ENCODE measurements at regions of chr16 and their contacts with region 1.

Region 1: DNA sequence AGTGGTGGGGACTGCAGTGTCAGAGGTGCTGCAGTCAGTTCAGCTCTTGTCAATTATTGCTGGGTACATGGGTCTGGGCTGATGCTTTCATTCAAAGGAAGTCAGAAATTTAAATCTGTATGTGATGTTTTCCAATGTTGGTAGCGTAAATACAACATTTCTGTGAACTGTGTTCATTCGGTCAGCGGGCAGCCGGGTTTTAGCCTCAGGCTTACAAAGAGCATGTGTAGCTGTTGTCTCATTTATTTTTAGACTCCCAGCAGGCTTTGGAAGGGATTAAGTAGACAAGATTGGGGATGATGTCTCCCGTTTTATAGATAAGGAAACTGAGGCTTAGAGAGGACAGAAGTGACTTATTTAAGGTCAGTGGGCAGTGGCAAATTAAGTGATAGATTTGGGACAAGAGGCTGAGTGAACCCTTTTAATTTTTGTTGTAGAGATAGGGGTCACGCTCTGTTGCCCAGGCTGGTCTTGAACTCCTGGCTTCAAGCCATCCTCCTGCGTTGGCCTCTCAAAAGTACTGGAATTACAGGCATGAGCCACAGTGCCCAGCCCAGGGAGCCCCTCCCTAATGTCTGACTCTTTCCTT is 8.1 kb downstream of the AQP8 start:
- DNase-seq: no peak
- H3K4me3 Mint-ChIP-seq: no peak overlapping the region
- H3K27ac Mint-ChIP-seq: no peak overlapping the region
- H3K4me1 Mint-ChIP-seq: peaks cover 7% of the 10 kb centered on the region
- H3K27me3 Mint-ChIP-seq: no peaks in the 10 kb centered on the region
- CTCF ChIP-seq: no peak

Region 2: DNA sequence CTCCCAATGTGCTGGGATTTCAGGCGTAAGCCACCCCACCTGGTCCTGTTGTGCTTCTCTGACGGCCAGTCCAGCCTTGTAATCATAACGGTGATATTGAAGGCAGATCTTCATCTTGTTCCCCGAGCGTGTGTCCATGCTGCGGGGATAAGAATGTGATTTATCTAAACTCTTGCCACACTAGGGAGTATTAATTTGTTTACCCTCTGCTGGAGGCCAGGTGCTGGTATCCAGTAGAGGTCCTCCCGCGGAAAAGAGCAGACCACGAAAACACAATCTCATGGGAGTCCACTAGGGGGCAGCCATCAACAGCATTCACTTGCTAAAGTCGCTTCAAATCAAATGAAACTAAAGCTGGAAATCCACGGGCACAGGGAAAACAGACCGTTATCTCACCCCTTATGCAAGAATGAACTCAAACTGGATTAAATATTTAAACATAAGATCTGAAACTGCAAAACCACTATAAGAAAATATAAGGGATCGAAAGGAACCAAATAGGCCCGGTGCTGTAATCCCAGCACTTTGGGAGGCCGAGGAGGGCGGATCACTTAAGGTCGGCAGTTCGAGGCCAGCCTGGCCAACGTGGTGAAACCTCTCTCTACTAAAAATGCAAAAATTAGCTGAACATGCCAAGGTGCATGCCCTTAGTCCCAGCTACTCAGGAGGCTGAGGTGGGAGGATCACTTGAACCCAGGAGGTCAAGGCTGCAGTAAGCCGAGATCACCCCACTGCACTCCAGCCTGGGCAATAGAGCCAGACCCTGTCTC is 707.7 kb before region 1 on chr16:
- CTCF ChIA-PET with region 1: interaction called, 5 read pairs
- POLR2A ChIA-PET with region 1: no interaction called
- intact Hi-C with region 1: loop called (anchors 5 kb)
- DNase-seq: peak; percentile 86
- H3K4me3 Mint-ChIP-seq: peak overlapping the region; percentile 39
- H3K27ac Mint-ChIP-seq: no peak overlapping the region
- H3K4me1 Mint-ChIP-seq: peaks cover 6% of the 10 kb centered on the region
- H3K27me3 Mint-ChIP-seq: no peaks in the 10 kb centered on the region
- CTCF ChIP-seq: peak; percentile 87

Region 3: DNA sequence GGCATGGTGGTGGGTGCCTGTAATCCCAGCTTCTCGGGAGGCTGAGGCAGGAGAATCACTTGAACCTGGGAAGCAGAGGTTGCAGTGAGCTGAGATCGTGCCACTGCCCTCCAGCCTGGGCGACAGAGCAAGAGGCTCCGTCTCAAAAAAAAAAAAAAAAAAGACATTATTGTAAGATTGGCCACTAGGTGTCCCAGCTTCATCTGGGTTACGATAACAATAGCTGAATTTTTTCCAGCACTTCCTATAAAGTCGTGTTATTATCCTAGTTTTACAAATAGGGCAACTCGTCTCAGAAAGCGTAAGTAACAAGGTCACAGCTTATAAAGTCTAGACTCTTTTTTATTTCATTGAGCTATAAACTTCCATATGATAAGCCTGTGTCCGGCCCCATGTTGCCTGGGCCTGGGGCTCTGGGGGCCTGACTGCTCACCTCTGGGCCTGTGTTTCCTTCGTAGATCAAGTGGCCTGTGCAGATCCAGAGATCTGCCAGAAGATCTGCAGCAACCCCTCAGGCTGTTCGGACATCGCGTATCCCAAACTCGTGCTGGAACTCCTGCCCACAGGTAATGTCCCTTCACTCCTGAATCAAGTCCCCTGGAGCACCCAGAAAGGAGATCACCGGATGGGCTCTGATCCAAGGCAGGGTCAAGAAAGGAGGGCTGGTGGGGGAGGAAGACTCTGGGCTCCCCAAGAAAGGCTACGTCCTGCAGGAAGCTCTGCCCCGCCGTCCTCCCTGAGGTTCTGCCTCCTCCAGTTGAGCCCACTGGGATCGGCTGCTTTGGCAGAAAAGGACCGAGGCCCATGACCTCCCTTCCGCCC is 318.4 kb before region 1 on chr16:
- CTCF ChIA-PET with region 1: interaction called, 17 read pairs
- POLR2A ChIA-PET with region 1: no interaction called
- intact Hi-C with region 1: no loop called
- DNase-seq: peak; percentile 26
- H3K4me3 Mint-ChIP-seq: no peak overlapping the region
- H3K27ac Mint-ChIP-seq: no peak overlapping the region
- H3K4me1 Mint-ChIP-seq: no peaks in the 10 kb centered on the region
- H3K27me3 Mint-ChIP-seq: peaks cover 22% of the 10 kb centered on the region
- CTCF ChIP-seq: peak; percentile 49

Region 4: GRCh38 chr16:25051406-25052150 is 173.2 kb before region 1 on chr16:
- CTCF ChIA-PET with region 1: interaction called, 22 read pairs
- POLR2A ChIA-PET with region 1: no interaction called
- intact Hi-C with region 1: loop called (anchors 1 kb)
- DNase-seq: no peak
- H3K4me3 Mint-ChIP-seq: no peak overlapping the region
- H3K27ac Mint-ChIP-seq: peak overlapping the region; percentile 23
- H3K4me1 Mint-ChIP-seq: peaks cover 20% of the 10 kb centered on the region
- H3K27me3 Mint-ChIP-seq: no peaks in the 10 kb centered on the region
- CTCF ChIP-seq: no peak

Region 5: GRCh38 chr16:25126820-25127232 is 98.0 kb before region 1 on chr16:
- CTCF ChIA-PET with region 1: interaction called, 19 read pairs
- POLR2A ChIA-PET with region 1: no interaction called
- intact Hi-C with region 1: loop called (anchors 1 kb)
- DNase-seq: peak; percentile 86
- H3K4me3 Mint-ChIP-seq: no peak overlapping the region
- H3K27ac Mint-ChIP-seq: no peak overlapping the region
- H3K4me1 Mint-ChIP-seq: peaks cover 15% of the 10 kb centered on the region
- H3K27me3 Mint-ChIP-seq: no peaks in the 10 kb centered on the region
- CTCF ChIP-seq: peak; percentile 58

Region 6: DNA sequence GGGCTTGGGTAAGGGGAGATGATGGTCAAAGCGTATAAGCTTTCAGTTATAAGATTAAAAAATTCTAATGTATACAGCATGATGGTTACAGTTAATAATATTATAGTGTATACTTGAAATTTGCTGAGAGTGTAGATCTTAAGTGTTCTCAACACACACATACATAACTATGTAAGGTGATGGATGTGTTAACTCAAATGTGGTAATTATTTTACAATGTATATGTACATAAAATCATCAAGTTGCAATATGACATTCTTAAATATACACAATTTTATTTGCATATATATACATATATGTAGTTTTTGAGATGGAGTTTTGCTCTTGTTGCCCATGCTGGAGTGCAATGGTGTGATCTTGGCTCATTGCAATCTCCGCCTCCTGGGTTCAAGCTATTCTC is 25.6 kb after region 1 on chr16:
- CTCF ChIA-PET with region 1: interaction called, 18 read pairs
- POLR2A ChIA-PET with region 1: no interaction called
- intact Hi-C with region 1: no loop called
- DNase-seq: no peak
- H3K4me3 Mint-ChIP-seq: no peak overlapping the region
- H3K27ac Mint-ChIP-seq: no peak overlapping the region
- H3K4me1 Mint-ChIP-seq: no peaks in the 10 kb centered on the region
- H3K27me3 Mint-ChIP-seq: no peaks in the 10 kb centered on the region
- CTCF ChIP-seq: no peak

Region 7: GRCh38 chr16:25395528-25395927 is 170.7 kb after region 1 on chr16:
- CTCF ChIA-PET with region 1: no interaction called
- POLR2A ChIA-PET with region 1: no interaction called
- intact Hi-C with region 1: no loop called
- DNase-seq: no peak
- H3K4me3 Mint-ChIP-seq: no peak overlapping the region
- H3K27ac Mint-ChIP-seq: no peak overlapping the region
- H3K4me1 Mint-ChIP-seq: no peaks in the 10 kb centered on the region
- H3K27me3 Mint-ChIP-seq: no peaks in the 10 kb centered on the region
- CTCF ChIP-seq: no peak

Measured in MCF 10A (cell line).